ENCODE measurements at regions of chr15 and their contacts with region 1.

Region 1: DNA sequence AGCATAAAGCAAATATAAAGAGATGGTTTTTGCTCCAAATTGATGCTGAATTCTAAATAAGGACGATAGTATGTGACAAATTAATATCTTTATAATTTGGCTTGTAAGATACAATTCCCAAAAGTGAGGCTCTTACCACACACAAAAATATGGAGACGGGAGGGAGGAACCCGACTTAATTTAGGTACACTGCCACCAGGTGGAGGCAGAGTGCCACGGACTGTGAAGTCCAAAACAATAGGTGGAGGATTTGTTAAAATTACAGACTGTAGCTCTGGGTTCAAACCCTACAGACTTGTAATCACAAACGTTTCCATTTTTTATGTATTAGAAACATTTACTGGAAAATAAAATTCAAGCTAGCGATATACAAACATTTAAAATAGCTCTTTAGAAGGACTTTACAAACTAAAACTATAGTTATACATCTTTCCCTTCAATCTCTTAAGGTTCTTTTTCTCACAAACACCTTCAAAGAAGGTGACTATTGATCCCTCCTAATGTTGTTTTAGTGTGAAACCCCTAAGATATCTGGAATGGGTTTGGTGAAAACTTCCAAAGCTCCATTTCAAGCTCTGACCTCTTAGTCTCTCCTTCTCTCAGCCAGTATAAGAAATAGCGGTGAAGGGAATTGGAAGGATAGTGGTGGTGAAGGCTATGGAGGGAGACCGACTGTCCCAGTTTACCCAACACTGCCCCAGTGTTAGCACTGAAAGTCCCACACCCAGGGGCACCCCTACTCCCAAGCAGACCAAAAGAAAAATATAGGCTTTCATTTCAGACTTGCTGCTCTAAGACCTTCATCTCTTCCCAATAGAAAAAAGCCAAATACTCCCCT is 89.7 kb downstream of the AQP9 start:
- DNase-seq: peak; percentile 85
- H3K4me3 Mint-ChIP-seq: no peak overlapping the region
- H3K27ac Mint-ChIP-seq: no peak overlapping the region
- H3K4me1 Mint-ChIP-seq: peaks cover 6% of the 10 kb centered on the region
- H3K27me3 Mint-ChIP-seq: no peaks in the 10 kb centered on the region
- CTCF ChIP-seq: peak; percentile 92

Region 2: DNA sequence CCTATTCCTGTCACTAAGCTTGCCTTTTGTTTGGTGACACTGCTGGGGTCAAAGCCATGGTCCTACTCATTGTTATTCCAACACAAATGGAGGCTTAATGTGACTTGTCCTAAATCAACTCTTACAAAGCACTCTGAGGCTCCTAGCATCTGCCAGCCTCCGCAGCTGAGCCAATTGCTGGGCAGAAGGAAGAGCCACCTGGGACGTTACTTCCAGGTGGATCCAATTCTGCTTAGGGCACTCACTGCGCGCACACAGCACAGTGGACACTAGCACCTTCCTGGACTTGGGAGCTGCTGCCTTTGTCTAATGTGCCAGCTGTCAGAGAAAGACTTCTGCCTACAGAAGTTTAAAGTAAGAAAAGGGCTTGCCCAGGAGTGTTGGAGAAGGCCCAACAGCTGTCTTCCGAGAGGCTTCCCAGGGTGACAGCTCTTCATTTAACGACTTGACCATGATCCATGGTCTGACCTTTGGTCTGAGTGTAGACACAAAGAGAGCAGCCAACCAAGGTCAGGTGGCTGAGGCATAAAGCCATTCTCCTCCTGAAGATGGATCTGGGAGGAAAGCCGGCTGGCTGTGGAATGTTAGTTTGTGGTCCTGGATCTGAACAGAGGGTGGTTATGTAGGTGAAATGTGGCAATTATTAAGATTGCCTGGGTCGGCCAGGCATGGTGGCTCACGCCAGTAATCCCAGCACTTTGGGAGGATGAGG is 12.5 kb after region 1 on chr15:
- CTCF ChIA-PET with region 1: interaction called, 11 read pairs
- POLR2A ChIA-PET with region 1: no interaction called
- intact Hi-C with region 1: no loop called
- DNase-seq: no peak
- H3K4me3 Mint-ChIP-seq: no peak overlapping the region
- H3K27ac Mint-ChIP-seq: no peak overlapping the region
- H3K4me1 Mint-ChIP-seq: no peaks in the 10 kb centered on the region
- H3K27me3 Mint-ChIP-seq: no peaks in the 10 kb centered on the region
- CTCF ChIP-seq: no peak

Region 3: GRCh38 chr15:58758138-58758537 is 530.2 kb after region 1 on chr15:
- CTCF ChIA-PET with region 1: interaction called, 6 read pairs
- POLR2A ChIA-PET with region 1: no interaction called
- intact Hi-C with region 1: loop called (anchors 1 kb)
- DNase-seq: no peak
- H3K4me3 Mint-ChIP-seq: no peak overlapping the region
- H3K27ac Mint-ChIP-seq: no peak overlapping the region
- H3K4me1 Mint-ChIP-seq: no peaks in the 10 kb centered on the region
- H3K27me3 Mint-ChIP-seq: no peaks in the 10 kb centered on the region
- CTCF ChIP-seq: no peak

Region 4: DNA sequence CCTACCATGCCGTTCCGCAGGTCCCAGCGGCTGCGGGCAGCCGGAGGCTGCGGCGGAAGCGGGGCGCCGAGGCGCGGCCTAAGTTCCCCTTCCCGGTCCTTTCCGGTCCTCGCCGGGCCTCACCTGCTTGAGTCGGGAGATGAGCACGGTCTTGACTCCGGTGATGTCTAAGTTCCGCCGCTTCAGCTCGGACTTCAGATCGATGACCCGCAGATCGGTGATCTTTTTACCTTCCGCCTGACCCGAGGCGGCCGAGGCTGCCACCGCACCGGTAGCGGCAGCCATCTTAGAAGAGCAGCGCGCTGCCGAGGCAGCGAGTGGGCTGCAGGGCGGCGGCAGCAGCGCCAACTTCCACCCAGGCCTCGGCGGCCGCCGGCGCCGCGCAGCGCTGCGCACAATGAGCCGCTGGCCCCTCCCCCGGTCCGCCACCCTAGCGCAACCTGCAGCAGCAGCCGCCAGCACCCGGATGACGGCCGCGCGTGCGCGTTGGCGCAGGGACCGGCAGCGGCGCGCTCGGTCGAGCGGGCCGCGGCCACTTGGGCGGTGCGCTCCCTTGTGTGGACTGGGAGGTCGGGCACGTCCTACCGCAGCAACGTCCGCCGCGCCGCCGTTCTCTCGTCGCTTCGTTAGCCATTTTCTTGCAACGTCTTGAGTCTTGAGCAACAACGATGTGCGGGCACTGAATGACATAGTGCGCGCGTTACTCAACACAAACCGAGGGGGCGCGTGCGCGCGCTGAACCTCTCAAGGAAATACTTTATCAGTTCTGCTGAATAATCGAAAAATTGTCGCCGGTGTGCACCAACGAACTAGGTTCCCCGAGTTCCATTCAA is 705.6 kb after region 1 on chr15 and contains the start of gene SLTM:
- CTCF ChIA-PET with region 1: interaction called, 3 read pairs
- POLR2A ChIA-PET with region 1: interaction called, 10 read pairs
- intact Hi-C with region 1: loop called (anchors 10 kb)
- DNase-seq: peak; percentile 91
- H3K4me3 Mint-ChIP-seq: peak within 1 kb of the TSS; percentile 92
- H3K27ac Mint-ChIP-seq: peak within 1 kb of the TSS; percentile 99
- H3K4me1 Mint-ChIP-seq: peaks cover 11% of the 10 kb centered on the region
- H3K27me3 Mint-ChIP-seq: no peaks in the 10 kb centered on the region
- CTCF ChIP-seq: no peak
- total RNA-seq, gene SLTM: 108 and 117 TPM in 2 replicates

Region 5: GRCh38 chr15:59138243-59138642 is 910.3 kb after region 1 on chr15:
- CTCF ChIA-PET with region 1: no interaction called
- POLR2A ChIA-PET with region 1: no interaction called
- intact Hi-C with region 1: loop called (anchors 10 kb)
- DNase-seq: peak; percentile 54
- H3K4me3 Mint-ChIP-seq: no peak overlapping the region
- H3K27ac Mint-ChIP-seq: no peak overlapping the region
- H3K4me1 Mint-ChIP-seq: peaks cover 15% of the 10 kb centered on the region
- H3K27me3 Mint-ChIP-seq: no peaks in the 10 kb centered on the region
- CTCF ChIP-seq: peak; percentile 56